ENCODE measurements at regions of chr3 and their contacts with region 1.

Region 1: GRCh38 chr3:157201648-157202278 is 41.8 kb upstream of the CCNL1 start:
- DNase-seq: peak; percentile 56

Region 2: DNA sequence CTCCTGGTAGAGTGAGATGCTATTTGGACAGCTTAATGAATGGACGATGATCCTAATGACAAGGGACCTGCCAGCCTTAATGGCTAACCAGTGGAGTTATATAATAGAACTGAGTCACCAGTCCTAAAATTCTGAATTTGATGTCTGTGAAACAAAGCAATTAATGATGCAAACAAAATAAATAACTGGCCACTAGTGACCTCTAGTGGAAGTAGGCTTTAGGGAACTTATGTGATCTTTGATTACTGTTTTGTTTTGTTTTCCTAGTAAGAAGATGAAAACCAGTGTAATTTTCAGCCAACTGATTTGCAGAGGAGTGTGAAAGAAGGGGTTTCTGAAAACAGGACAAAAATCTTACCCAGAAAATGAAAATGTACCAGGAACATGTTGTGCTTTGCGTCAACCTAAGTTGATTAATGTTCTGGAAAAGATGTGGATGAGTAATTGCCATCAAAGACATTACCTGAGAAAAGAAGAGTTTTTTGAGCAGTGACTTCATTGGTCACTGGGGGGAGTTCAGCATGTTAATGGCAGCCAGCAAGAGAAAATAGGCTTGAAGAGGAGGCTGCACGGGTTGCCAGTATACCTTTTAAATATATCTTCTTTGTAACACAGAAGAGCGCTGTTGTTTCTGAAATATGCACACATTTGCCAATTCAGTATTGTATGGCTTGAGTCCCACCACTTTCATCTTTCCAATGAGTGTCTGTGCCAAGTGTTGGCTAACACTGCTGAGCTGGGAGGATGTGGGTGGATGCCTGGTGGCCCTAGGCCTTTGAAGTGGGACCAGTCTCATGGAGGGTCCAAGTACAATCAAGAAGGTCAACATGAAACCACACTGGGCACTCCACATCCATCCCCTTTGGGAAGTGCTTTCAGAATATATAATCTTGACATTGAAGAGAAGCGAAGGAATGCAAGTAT is 292.1 kb after region 1 on chr3:
- in situ Hi-C with region 1: loop called (anchors 10 kb)
- DNase-seq: peak; percentile 49